ENCODE measurements at regions of chr15 and their contacts with region 1.

Region 1: GRCh38 chr15:84658080-84658787 is at the start of gene NMB:
- DNase-seq: peak; percentile 80
- H3K4me3 Mint-ChIP-seq: peak within 1 kb of the TSS; percentile 68
- H3K27ac Mint-ChIP-seq: peak within 1 kb of the TSS; percentile 83
- H3K4me1 Mint-ChIP-seq: peaks cover 6% of the 10 kb centered on the region
- H3K27me3 Mint-ChIP-seq: no peaks in the 10 kb centered on the region
- CTCF ChIP-seq: peak; percentile 53
- total RNA-seq, gene NMB: 5.1 and 7.1 TPM in 2 replicates

Region 2: DNA sequence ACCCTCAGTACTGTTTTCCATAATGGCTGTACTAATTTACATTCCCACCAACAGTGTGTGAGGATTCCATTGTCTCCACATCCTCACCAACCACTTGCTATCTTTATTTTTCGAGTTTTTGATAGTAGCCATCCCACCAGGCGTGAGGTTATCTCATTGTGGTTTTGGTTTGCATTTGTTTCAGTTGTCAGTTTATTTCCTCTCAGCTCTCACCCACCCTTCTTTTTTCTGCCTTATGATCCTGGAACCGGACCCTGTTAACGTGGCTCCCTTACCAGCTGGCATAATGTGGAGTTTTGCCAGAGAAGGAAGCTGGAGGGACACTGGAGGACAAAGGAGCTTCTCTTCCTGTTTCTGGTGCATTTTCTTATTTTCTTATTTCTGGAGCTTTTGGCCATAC is 1236.2 kb before region 1 on chr15:
- CTCF ChIA-PET with region 1: no interaction called
- POLR2A ChIA-PET with region 1: no interaction called
- intact Hi-C with region 1: no loop called
- DNase-seq: no peak
- H3K4me3 Mint-ChIP-seq: no peak overlapping the region
- H3K27ac Mint-ChIP-seq: no peak overlapping the region
- H3K4me1 Mint-ChIP-seq: no peaks in the 10 kb centered on the region
- H3K27me3 Mint-ChIP-seq: no peaks in the 10 kb centered on the region
- CTCF ChIP-seq: no peak

Region 3: GRCh38 chr15:83983634-83984458 is 674.4 kb before region 1 on chr15:
- CTCF ChIA-PET with region 1: no interaction called
- POLR2A ChIA-PET with region 1: no interaction called
- intact Hi-C with region 1: no loop called
- DNase-seq: no peak
- H3K4me3 Mint-ChIP-seq: no peak overlapping the region
- H3K27ac Mint-ChIP-seq: no peak overlapping the region
- H3K4me1 Mint-ChIP-seq: no peaks in the 10 kb centered on the region
- H3K27me3 Mint-ChIP-seq: no peaks in the 10 kb centered on the region
- CTCF ChIP-seq: no peak

Region 4: GRCh38 chr15:84588053-84588874 is 70.0 kb before region 1 on chr15:
- CTCF ChIA-PET with region 1: interaction called, 10 read pairs
- POLR2A ChIA-PET with region 1: interaction called, 4 read pairs
- intact Hi-C with region 1: loop called (anchors 1 kb)
- DNase-seq: peak; percentile 87
- H3K4me3 Mint-ChIP-seq: peak overlapping the region; percentile 59
- H3K27ac Mint-ChIP-seq: peak overlapping the region; percentile 76
- H3K4me1 Mint-ChIP-seq: peaks cover 6% of the 10 kb centered on the region
- H3K27me3 Mint-ChIP-seq: peaks cover 12% of the 10 kb centered on the region
- CTCF ChIP-seq: peak; percentile 95

Region 5: GRCh38 chr15:84616235-84616634 is 42.0 kb before region 1 on chr15:
- CTCF ChIA-PET with region 1: no interaction called
- POLR2A ChIA-PET with region 1: no interaction called
- intact Hi-C with region 1: no loop called
- DNase-seq: no peak
- H3K4me3 Mint-ChIP-seq: no peak overlapping the region
- H3K27ac Mint-ChIP-seq: no peak overlapping the region
- H3K4me1 Mint-ChIP-seq: no peaks in the 10 kb centered on the region
- H3K27me3 Mint-ChIP-seq: no peaks in the 10 kb centered on the region
- CTCF ChIP-seq: no peak

Region 6: DNA sequence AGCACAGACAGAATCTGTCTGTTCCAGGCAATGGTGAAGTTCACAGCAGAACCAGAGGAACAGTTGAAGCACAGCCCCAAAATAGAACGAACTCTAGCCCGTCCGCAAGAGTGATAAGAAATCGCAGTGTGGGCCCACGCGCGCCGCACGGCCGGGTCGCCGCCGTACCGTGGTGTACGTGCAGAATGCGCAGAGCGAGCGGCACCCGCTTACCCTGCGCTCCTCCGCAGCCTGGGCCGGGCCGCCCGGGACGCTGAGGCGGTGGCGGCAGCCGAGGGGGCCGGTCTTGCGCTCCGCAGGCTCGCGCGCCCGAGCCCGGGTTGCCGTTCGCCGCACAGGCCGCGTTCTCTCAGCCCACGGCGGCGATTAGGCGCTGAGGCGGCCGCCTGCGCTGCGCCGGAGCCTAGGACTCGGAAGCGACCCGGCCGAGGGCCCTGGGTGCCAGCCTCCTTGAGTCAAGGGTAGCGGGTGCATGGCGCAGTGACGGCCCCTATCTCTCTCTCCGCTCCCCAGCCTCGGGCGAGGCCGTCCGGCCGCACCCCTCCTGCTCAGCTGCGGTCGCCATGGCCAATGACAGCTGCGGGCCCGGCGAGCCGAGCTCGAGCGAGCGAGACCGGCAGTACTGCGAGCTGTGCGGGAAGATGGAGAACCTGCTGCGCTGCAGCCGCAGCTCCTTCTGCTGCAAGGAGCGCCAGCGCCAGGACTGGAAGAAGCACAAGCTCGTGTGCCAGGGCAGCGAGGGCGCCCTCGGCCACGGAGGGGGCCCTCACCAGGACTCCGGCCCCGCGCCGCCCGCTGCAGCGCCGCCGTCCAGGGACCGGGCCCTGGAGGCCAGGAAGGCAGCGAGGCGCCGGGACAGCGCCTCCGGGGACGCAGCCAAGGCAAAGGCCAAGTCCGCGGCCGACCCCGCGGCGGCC is 24.7 kb before region 1 on chr15:
- CTCF ChIA-PET with region 1: interaction called, 7 read pairs
- POLR2A ChIA-PET with region 1: interaction called, 30 read pairs
- intact Hi-C with region 1: loop called (anchors 1 kb)
- DNase-seq: peak; percentile 76
- H3K4me3 Mint-ChIP-seq: peak overlapping the region; percentile 91
- H3K27ac Mint-ChIP-seq: peak overlapping the region; percentile 71
- H3K4me1 Mint-ChIP-seq: peaks cover 23% of the 10 kb centered on the region
- H3K27me3 Mint-ChIP-seq: no peaks in the 10 kb centered on the region
- CTCF ChIP-seq: no peak

Region 7: DNA sequence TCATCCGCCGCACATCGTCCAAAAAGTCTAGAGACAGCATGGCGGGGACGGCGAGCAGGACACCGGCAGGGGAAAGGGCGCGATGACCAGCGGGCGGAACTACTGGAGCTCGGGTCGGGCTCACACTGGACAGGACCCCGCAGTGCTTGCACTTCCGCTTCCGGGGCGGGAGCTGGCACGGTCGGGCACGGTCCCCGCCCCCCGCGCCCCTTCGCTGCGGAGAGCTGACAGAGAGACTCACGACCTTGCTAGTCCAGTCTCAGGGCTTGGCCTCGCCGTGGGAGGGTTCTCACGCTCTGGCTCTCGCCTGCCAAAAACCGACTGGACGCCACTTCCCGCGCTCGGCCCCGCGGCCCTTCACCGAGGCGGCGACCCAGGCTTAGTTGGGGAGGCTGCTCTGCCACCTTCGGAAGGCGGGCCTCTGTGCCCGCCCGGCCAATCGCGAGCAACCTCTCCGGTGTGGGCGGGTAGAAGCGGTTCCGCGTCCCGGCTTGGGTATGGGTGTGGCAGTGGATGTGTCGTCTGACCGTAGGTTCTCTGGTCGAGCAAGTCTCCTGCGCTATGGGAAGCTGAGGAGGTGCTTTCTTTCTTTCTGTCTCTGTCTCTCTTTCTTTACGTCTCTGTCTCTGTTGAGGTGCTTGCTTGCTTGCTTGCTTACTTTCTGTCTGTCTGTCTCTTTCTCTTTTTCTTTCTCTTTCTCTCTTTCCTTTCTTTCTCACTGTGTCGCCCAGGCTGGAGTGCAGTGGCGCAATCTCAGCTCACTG is 58.0 kb after region 1 on chr15 and contains the start of gene SEC11A:
- CTCF ChIA-PET with region 1: interaction called, 7 read pairs
- POLR2A ChIA-PET with region 1: interaction called, 42 read pairs
- intact Hi-C with region 1: loop called (anchors 2 kb)
- DNase-seq: peak; percentile 96
- H3K4me3 Mint-ChIP-seq: peak within 1 kb of the TSS; percentile 83
- H3K27ac Mint-ChIP-seq: peak within 1 kb of the TSS; percentile 85
- H3K4me1 Mint-ChIP-seq: peaks cover 6% of the 10 kb centered on the region
- H3K27me3 Mint-ChIP-seq: no peaks in the 10 kb centered on the region
- CTCF ChIP-seq: no peak
- total RNA-seq, gene SEC11A: 192 and 197 TPM in 2 replicates

Region 8: GRCh38 chr15:84874981-84875699 is 216.9 kb after region 1 on chr15:
- CTCF ChIA-PET with region 1: interaction called, 3 read pairs
- POLR2A ChIA-PET with region 1: no interaction called
- intact Hi-C with region 1: loop called (anchors 2 kb)
- DNase-seq: no peak
- H3K4me3 Mint-ChIP-seq: no peak overlapping the region
- H3K27ac Mint-ChIP-seq: no peak overlapping the region
- H3K4me1 Mint-ChIP-seq: no peaks in the 10 kb centered on the region
- H3K27me3 Mint-ChIP-seq: no peaks in the 10 kb centered on the region
- CTCF ChIP-seq: no peak

Region 9: DNA sequence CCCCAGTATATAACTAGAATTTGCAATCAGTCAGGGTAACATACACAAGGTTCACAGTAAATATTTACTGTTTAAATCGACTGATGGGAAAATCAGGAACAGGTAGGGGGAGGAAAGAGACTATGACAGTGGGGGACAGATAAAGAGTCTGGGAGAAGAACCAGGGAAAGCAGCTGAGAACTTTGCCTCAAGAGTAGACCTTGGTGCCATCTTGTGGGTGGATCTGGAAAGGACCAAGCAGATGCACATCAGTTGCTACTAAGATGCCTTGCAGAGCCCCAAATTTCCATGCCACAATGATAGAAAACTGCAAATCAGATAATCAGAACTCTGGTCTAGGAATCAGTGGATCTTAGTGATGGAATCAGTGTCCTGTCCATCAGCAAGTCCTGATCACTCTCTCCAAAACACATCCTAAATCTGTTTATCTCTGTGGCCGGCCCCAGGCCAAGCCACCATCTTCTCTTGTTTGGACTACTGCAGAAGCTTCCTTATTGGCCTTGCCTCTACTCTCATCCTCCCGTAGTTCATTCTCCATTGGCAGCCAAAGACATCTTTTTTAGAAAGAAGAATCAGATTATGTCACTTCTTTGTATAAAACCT is 386.1 kb after region 1 on chr15:
- CTCF ChIA-PET with region 1: interaction called, 3 read pairs
- POLR2A ChIA-PET with region 1: no interaction called
- intact Hi-C with region 1: loop called (anchors 5 kb)
- DNase-seq: peak; percentile 75
- H3K4me3 Mint-ChIP-seq: no peak overlapping the region
- H3K27ac Mint-ChIP-seq: no peak overlapping the region
- H3K4me1 Mint-ChIP-seq: peaks cover 17% of the 10 kb centered on the region
- H3K27me3 Mint-ChIP-seq: no peaks in the 10 kb centered on the region
- CTCF ChIP-seq: peak; percentile 66

Measured in MCF 10A (cell line).